Panc1 (cell line): ENCODE measurements at regions of chr11 and their contacts with region 1.

Region 1: GRCh38 chr11:120335908-120336640 is at the start of gene ARHGEF12:
- DNase-seq: no peak
- ATAC-seq: peak; percentile 77
- H3K4me3 ChIP-seq: peak within 1 kb of the TSS; percentile 85 to 96
- H3K27ac ChIP-seq: peak within 1 kb of the TSS; percentile 98
- H3K4me1 ChIP-seq: peaks cover 53% of the 10 kb centered on the region
- H3K27me3 ChIP-seq: no peaks in the 10 kb centered on the region
- CTCF ChIP-seq: peak; percentile 92
- total RNA-seq, gene ARHGEF12: 182 TPM

Region 2: GRCh38 chr11:120386774-120387371 is 50.8 kb after region 1 on chr11:
- CTCF ChIA-PET with region 1: no interaction called
- POLR2A ChIA-PET with region 1: no interaction called
- in situ Hi-C with region 1: no loop called
- intact Hi-C with region 1: no loop called
- DNase-seq: no peak
- ATAC-seq: peak; percentile 52; the same call in 1 of the 2 replicates
- H3K4me3 ChIP-seq: no peak overlapping the region
- H3K27ac ChIP-seq: peak overlapping the region; percentile 4; the same call in 1 of the 2 replicates
- H3K4me1 ChIP-seq: peaks cover 49% of the 10 kb centered on the region
- H3K27me3 ChIP-seq: no peaks in the 10 kb centered on the region
- CTCF ChIP-seq: no peak

Region 3: GRCh38 chr11:120400564-120401364 is 64.7 kb after region 1 on chr11:
- CTCF ChIA-PET with region 1: no interaction called
- POLR2A ChIA-PET with region 1: no interaction called
- in situ Hi-C with region 1: no loop called
- intact Hi-C with region 1: loop called (anchors 2 kb)
- DNase-seq: peak; percentile 81
- ATAC-seq: peak; percentile 95
- H3K4me3 ChIP-seq: peak overlapping the region; percentile 39 to 45
- H3K27ac ChIP-seq: peak overlapping the region; percentile 99
- H3K4me1 ChIP-seq: peaks cover 92% of the 10 kb centered on the region
- H3K27me3 ChIP-seq: no peaks in the 10 kb centered on the region
- CTCF ChIP-seq: no peak

Region 4: GRCh38 chr11:120432056-120433018 is 96.3 kb after region 1 on chr11:
- CTCF ChIA-PET with region 1: interaction called, 8 read pairs
- POLR2A ChIA-PET with region 1: interaction called, 4 read pairs
- in situ Hi-C with region 1: no loop called
- intact Hi-C with region 1: loop called (anchors 1 kb)
- DNase-seq: peak; percentile 99
- ATAC-seq: peak; percentile 98
- H3K4me3 ChIP-seq: peak overlapping the region; percentile 6 to 14; a peak in 3 of 4 replicates
- H3K27ac ChIP-seq: peak overlapping the region; percentile 99
- H3K4me1 ChIP-seq: peaks cover 61% of the 10 kb centered on the region
- H3K27me3 ChIP-seq: no peaks in the 10 kb centered on the region
- CTCF ChIP-seq: no peak

Region 5: GRCh38 chr11:120482149-120482548 is 146.1 kb after region 1 on chr11:
- CTCF ChIA-PET with region 1: no interaction called
- POLR2A ChIA-PET with region 1: interaction called, 16 read pairs
- in situ Hi-C with region 1: no loop called
- intact Hi-C with region 1: no loop called
- DNase-seq: no peak
- ATAC-seq: no peak
- H3K4me3 ChIP-seq: no peak overlapping the region
- H3K27ac ChIP-seq: no peak overlapping the region
- H3K4me1 ChIP-seq: no peaks in the 10 kb centered on the region
- H3K27me3 ChIP-seq: no peaks in the 10 kb centered on the region
- CTCF ChIP-seq: no peak